ENCODE measurements at regions of chr1 and their contacts with region 1.

Region 1: DNA sequence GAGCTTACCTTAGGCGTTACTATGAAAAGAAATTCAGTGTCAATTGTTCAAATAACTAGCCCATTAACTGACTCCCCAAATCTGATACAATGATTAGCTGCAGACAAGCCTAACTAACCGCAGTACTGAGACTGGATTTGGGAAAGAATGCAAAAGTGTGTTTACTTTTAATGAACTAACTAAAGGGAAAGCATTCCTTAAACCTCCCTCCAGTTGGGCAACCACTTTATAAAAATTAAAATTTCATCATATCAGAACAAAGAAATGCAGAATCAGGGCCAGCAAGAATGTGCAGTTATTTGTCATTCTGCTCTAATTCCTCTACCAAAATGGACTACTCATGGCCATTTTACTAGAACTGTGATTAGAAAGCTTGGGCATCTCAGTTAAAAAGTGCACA is 11.7 kb upstream of the NR5A2 start:
- DNase-seq: no peak
- H3K4me3 ChIP-seq: no peak overlapping the region
- H3K27ac ChIP-seq: no peak overlapping the region
- H3K4me1 ChIP-seq: peaks cover 0 to under 1% (median under 1%) of the 10 kb centered on the region in 4 donors
- H3K27me3 ChIP-seq: peaks cover 2% of the 10 kb centered on the region
- CTCF ChIP-seq: no peak
- EP300 ChIP-seq: no peak
- POLR2A ChIP-seq: no peak

Region 2: GRCh38 chr1:200035956-200036618 is 20.3 kb after region 1 on chr1:
- in situ Hi-C with region 1: no loop called
- intact Hi-C with region 1: loop called (anchors 1 kb)
- DNase-seq: no peak
- H3K4me3 ChIP-seq: peak overlapping the region in 3 of 4 donors; percentile 18 to 32 (median 28)
- H3K27ac ChIP-seq: peak overlapping the region; percentile 79 to 83 (median 80)
- H3K4me1 ChIP-seq: peaks cover 6 to 81% (median 27%) of the 10 kb centered on the region in 4 donors
- H3K27me3 ChIP-seq: peaks cover 93% of the 10 kb centered on the region
- CTCF ChIP-seq: no peak
- EP300 ChIP-seq: no peak
- POLR2A ChIP-seq: no peak